HepG2 (cell line): ENCODE measurements at regions of chr7 and their contacts with region 1.

Region 1: DNA sequence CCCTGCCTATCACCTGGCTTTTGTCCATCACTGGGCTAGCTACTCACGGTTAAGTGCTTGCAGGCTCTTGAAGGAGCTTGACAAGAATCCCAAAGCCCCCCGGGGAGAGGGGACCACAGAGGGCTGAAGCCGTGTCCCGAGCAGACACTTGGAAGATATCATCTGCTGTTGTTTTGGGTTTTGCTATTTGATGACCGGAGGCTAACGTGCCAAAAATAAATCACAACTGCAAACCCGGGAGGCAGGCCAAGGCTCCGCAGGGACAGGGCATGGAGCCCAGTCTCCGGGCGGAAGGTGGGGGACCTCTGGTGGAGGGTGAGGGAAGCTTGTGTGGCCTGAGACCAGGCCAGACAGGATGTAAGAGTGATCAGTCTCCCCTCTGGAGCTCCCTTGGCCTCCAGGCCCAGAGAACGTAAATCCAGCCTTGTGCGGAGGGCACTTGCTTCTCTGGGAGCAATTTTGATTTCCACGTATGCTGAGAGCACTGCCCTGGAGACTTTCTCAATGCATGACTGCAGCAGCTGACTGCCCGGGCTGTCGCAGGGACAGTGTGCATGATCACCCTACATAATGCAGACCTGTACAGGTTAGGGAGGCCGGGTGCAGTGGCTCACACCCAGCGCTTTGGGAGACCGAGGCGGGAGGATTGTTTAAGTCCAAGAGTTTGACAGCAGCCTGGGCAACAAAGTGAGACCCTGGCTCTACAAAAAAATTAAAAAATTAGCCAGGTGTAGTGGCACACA is at the start of gene PHKG1:
- DNase-seq: peak; percentile 33
- ATAC-seq: peak; percentile 96
- H3K4me3 ChIP-seq: no peak within 1 kb of the TSS; a peak in 1 of 6 replicates
- H3K27ac ChIP-seq: no peak within 1 kb of the TSS
- H3K4me1 ChIP-seq: peaks cover 15% of the 10 kb centered on the region
- H3K27me3 ChIP-seq: no peaks in the 10 kb centered on the region
- CTCF ChIP-seq: peak; percentile 77
- EP300 ChIP-seq: no peak
- POLR2A ChIP-seq: no peak
- RAD21 ChIP-seq: peak; percentile 62
- total RNA-seq, gene PHKG1: 0.44 TPM in 1 of 2 replicates, not detected in the other

Region 2: GRCh38 chr7:55508221-55509011 is 584.5 kb before region 1 on chr7:
- CTCF ChIA-PET with region 1: no interaction called
- POLR2A ChIA-PET with region 1: no interaction called
- in situ Hi-C with region 1: no loop called
- intact Hi-C with region 1: no loop called
- DNase-seq: peak; percentile 5
- ATAC-seq: no peak
- H3K4me3 ChIP-seq: no peak overlapping the region
- H3K27ac ChIP-seq: no peak overlapping the region
- H3K4me1 ChIP-seq: peaks cover 8% of the 10 kb centered on the region; the same call in 1 of the 2 replicates
- H3K27me3 ChIP-seq: no peaks in the 10 kb centered on the region
- CTCF ChIP-seq: no peak
- EP300 ChIP-seq: no peak
- POLR2A ChIP-seq: no peak
- RAD21 ChIP-seq: no peak

Region 3: DNA sequence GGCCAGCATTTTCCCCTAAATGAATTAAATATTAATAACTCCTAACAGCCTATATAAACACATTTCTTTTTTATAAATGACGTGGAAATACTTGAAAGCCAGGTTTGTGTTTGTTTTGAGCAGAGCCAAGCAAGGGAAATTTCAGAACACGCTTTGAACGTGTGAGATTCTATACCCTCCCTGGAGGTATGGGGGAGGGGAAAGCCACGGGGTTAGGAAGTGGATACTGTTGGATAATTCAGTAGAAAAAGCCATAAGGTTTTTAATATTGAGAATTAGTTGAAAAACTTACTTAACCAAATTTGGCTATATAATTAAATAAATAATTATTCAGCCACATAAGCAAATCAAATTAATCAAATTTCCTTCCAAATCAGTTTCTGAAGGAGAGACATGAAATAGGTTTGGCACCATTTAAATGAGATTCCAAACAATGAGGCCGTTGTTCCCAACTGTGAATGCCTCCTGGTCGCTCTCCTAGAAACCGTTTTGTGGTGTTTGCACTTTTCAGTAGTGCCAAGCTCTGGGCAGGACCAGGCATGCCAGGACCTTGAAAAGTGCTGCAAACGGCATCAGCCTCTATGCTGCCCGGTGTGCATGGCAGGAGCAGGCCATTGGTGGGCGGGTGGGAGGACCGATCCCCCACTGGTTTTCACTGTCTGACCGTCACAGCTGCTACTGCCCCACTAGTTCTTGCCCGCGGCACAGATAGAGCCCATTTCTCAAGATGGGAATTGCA is 318.5 kb before region 1 on chr7:
- CTCF ChIA-PET with region 1: no interaction called
- POLR2A ChIA-PET with region 1: no interaction called
- in situ Hi-C with region 1: loop called (anchors 25 kb)
- intact Hi-C with region 1: no loop called
- DNase-seq: no peak
- ATAC-seq: peak; percentile 56
- H3K4me3 ChIP-seq: no peak overlapping the region
- H3K27ac ChIP-seq: no peak overlapping the region
- H3K4me1 ChIP-seq: 0 out of 2 replicates have a peak, but pooled peaks cover 4% of the 10 kb centered on the region
- H3K27me3 ChIP-seq: no peaks in the 10 kb centered on the region
- CTCF ChIP-seq: no peak
- EP300 ChIP-seq: no peak
- POLR2A ChIP-seq: no peak
- RAD21 ChIP-seq: no peak

Region 4: DNA sequence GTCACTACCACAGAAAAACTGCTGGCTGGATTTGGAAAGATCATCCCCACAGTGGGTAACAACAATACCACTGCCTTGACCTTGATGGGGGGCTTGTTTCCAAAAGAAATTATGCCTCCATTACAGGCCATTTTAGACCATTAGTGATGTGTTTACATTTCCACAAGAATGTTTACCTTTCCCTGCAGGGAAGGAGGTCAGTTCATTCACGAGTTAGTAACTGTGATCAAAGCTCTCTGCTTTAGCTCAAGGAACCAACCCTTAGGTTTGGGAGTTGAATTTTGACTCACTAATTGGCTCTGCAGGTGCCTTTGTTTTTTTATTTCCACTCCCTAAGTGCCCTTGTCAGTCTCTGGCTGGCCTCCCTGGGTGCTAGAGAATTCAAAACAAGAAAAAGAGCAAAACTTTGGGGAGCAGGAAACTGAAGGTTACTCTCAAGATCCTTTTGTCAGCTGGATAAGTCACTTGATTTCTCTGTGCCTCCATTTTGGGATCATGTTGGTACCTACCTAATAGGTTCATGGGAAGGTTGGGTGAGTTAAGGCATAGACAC is 64.4 kb after region 1 on chr7:
- CTCF ChIA-PET with region 1: no interaction called
- POLR2A ChIA-PET with region 1: no interaction called
- in situ Hi-C with region 1: no loop called
- intact Hi-C with region 1: no loop called
- DNase-seq: no peak
- ATAC-seq: no peak
- H3K4me3 ChIP-seq: no peak overlapping the region
- H3K27ac ChIP-seq: no peak overlapping the region
- H3K4me1 ChIP-seq: peaks cover 11% of the 10 kb centered on the region
- H3K27me3 ChIP-seq: no peaks in the 10 kb centered on the region; a peak in 1 of 5 replicates
- CTCF ChIP-seq: no peak
- EP300 ChIP-seq: no peak
- POLR2A ChIP-seq: no peak
- RAD21 ChIP-seq: no peak

Region 5: GRCh38 chr7:57505176-57505575 is 1412.2 kb after region 1 on chr7:
- CTCF ChIA-PET with region 1: no interaction called
- POLR2A ChIA-PET with region 1: no interaction called
- in situ Hi-C with region 1: no loop called
- intact Hi-C with region 1: no loop called
- DNase-seq: no peak
- ATAC-seq: no peak
- H3K4me3 ChIP-seq: no peak overlapping the region
- H3K27ac ChIP-seq: no peak overlapping the region
- H3K4me1 ChIP-seq: no peaks in the 10 kb centered on the region
- H3K27me3 ChIP-seq: no peaks in the 10 kb centered on the region
- CTCF ChIP-seq: no peak
- EP300 ChIP-seq: no peak
- POLR2A ChIP-seq: no peak
- RAD21 ChIP-seq: no peak